WTC11 (cell line): ENCODE measurements at regions of chr19 and their contacts with region 1.

Region 1: DNA sequence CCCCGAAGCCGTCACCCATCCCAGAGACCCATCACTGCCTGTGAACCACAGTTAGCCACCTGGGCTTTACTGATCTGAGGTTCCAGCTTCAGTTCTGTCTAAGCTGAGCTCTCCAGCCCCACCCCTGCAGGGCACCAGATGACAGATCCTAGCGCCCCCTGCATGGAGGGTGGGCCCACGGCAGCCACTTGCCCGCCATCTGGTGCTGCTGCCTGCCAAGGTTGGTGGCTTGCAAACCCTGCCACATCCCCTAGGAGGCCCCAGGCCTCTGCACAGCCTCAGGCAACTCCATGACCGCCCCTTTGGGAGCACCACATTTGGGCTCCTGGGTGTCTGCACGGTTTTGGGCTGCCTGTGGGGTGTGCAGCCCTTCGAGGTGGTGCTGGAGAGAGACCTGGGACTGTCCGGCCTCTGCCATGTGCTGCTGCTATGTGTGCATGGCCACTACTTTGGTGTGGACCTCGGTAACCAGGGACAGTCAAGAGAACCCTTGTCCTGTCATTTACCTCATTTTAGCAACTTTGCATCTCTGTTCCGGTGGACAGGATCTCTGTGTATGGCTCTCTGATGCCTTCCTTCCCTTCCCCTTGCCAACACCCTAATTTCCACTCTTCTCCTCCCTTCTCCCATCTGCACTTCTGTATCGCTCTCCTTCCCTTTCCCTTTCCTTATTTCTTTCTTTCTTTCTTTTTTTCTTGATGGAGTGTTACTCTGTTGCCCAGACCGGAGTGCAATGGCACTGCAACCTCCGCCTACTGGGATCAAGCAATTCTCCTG is 17.4 kb upstream of the SDHAF1 start:
- DNase-seq: peak; percentile 86
- ATAC-seq: peak; percentile 95
- H3K4me3 Mint-ChIP-seq: no peak overlapping the region
- H3K27ac Mint-ChIP-seq: peak overlapping the region; percentile 72; the same call in 1 of the 2 replicates
- H3K4me1 Mint-ChIP-seq: peaks cover 13% of the 10 kb centered on the region
- H3K27me3 Mint-ChIP-seq: peaks cover 20% of the 10 kb centered on the region
- CTCF ChIP-seq: peak; percentile 35; the same call in 1 of the 2 replicates

Region 2: GRCh38 chr19:35805526-35806102 is 172.0 kb before region 1 on chr19:
- CTCF ChIA-PET with region 1: no interaction called
- POLR2A ChIA-PET with region 1: no interaction called
- DNase-seq: no peak
- ATAC-seq: no peak
- H3K4me3 Mint-ChIP-seq: no peak overlapping the region
- H3K27ac Mint-ChIP-seq: no peak overlapping the region
- H3K4me1 Mint-ChIP-seq: peaks cover 2% of the 10 kb centered on the region
- H3K27me3 Mint-ChIP-seq: peaks cover 22% of the 10 kb centered on the region
- CTCF ChIP-seq: no peak

Region 3: DNA sequence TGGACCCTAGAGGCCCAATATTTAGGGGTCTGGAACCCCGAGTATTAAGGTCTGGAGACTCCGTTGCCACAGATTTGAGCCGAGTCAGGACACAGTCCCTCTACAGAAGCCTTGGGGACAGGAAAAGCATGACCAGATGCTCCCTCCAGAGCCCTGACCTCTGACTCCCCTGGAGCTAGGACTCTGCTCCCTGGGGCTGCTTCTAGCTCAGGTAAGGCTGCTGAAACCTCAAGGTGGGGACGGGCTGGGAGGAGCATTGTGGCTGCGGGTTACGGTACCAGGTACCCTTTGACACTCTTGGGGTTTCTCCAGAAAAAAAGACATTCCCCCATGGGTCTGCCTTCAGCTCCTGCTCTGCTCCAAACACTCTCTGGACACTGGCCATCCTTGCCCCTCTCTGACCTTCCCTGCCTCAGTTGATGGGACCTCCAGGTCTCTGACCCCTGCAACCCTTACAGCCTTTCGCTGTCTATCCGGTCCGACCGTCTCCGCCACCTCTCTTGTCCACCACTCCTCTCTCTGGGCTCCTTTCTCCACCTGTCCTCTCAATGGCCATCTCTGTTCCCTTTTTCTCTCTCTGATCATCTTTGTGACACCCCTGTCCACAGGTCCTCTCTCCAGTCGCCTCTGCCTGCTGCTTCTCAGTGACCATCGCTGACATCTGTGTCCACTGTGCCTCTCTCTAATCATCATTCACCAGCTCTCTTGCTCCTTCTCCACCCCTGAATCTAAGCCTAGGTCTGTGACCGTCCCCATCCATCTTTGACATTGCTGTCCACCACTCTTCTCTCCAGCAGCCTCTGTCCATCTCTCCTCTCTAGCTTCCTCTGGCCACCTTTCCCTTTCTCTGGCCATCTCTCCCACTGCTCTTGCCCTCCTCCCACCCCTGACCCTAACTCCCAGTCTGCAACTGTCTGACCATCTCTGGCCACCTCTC is 40.0 kb before region 1 on chr19:
- CTCF ChIA-PET with region 1: no interaction called
- POLR2A ChIA-PET with region 1: no interaction called
- DNase-seq: no peak
- ATAC-seq: no peak
- H3K4me3 Mint-ChIP-seq: peak overlapping the region; percentile 70
- H3K27ac Mint-ChIP-seq: peak overlapping the region; percentile 11; the same call in 1 of the 2 replicates
- H3K4me1 Mint-ChIP-seq: peaks cover 26% of the 10 kb centered on the region
- H3K27me3 Mint-ChIP-seq: no peaks in the 10 kb centered on the region
- CTCF ChIP-seq: no peak

Region 4: GRCh38 chr19:35966771-35967170 is 10.9 kb before region 1 on chr19:
- CTCF ChIA-PET with region 1: interaction called, 12 read pairs
- POLR2A ChIA-PET with region 1: no interaction called
- DNase-seq: no peak
- ATAC-seq: no peak
- H3K4me3 Mint-ChIP-seq: no peak overlapping the region
- H3K27ac Mint-ChIP-seq: no peak overlapping the region
- H3K4me1 Mint-ChIP-seq: no peaks in the 10 kb centered on the region
- H3K27me3 Mint-ChIP-seq: peaks cover 4% of the 10 kb centered on the region
- CTCF ChIP-seq: no peak

Region 5: GRCh38 chr19:36014029-36014924 is 36.6 kb after region 1 on chr19 and contains the start of gene ALKBH6:
- CTCF ChIA-PET with region 1: interaction called, 10 read pairs
- POLR2A ChIA-PET with region 1: no interaction called
- DNase-seq: peak; percentile 100
- ATAC-seq: peak; percentile 99
- H3K4me3 Mint-ChIP-seq: peak within 1 kb of the TSS; percentile 100
- H3K27ac Mint-ChIP-seq: peak within 1 kb of the TSS; percentile 94
- H3K4me1 Mint-ChIP-seq: peaks cover 26% of the 10 kb centered on the region
- H3K27me3 Mint-ChIP-seq: peaks cover 16% of the 10 kb centered on the region
- CTCF ChIP-seq: no peak
- total RNA-seq, gene ALKBH6: 28.1 to 35.1 TPM (median 31.9 TPM) in 3 replicates

Region 6: GRCh38 chr19:36043952-36044351 is 66.3 kb after region 1 on chr19:
- CTCF ChIA-PET with region 1: no interaction called
- POLR2A ChIA-PET with region 1: no interaction called
- DNase-seq: no peak
- ATAC-seq: no peak
- H3K4me3 Mint-ChIP-seq: no peak overlapping the region
- H3K27ac Mint-ChIP-seq: no peak overlapping the region
- H3K4me1 Mint-ChIP-seq: peaks cover 12% of the 10 kb centered on the region
- H3K27me3 Mint-ChIP-seq: no peaks in the 10 kb centered on the region
- CTCF ChIP-seq: no peak